Endothelial cell of umbilical vein (primary cell): ENCODE measurements at regions of chr3 and their contacts with region 1.

Region 1: GRCh38 chr3:16140116-16140893 is 34.2 kb upstream of the GALNT15 start:
- DNase-seq: peak; percentile 91
- H3K4me3 ChIP-seq: no peak overlapping the region
- H3K27ac ChIP-seq: peak overlapping the region; percentile 83
- H3K4me1 ChIP-seq: peaks cover 16% of the 10 kb centered on the region
- H3K27me3 ChIP-seq: no peaks in the 10 kb centered on the region
- CTCF ChIP-seq: no peak
- POLR2A ChIP-seq: peak; percentile 19

Region 2: GRCh38 chr3:15974647-15975046 is 165.7 kb before region 1 on chr3:
- CTCF ChIA-PET with region 1: no interaction called
- POLR2A ChIA-PET with region 1: no interaction called
- dilution Hi-C with region 1: no loop called
- intact Hi-C with region 1: no loop called
- DNase-seq: no peak
- H3K4me3 ChIP-seq: no peak overlapping the region
- H3K27ac ChIP-seq: no peak overlapping the region
- H3K4me1 ChIP-seq: no peaks in the 10 kb centered on the region
- H3K27me3 ChIP-seq: peaks cover 0 to 3% of the 10 kb centered on the region in 2 experiments
- CTCF ChIP-seq: peak; percentile 13 to 17
- POLR2A ChIP-seq: no peak

Region 3: DNA sequence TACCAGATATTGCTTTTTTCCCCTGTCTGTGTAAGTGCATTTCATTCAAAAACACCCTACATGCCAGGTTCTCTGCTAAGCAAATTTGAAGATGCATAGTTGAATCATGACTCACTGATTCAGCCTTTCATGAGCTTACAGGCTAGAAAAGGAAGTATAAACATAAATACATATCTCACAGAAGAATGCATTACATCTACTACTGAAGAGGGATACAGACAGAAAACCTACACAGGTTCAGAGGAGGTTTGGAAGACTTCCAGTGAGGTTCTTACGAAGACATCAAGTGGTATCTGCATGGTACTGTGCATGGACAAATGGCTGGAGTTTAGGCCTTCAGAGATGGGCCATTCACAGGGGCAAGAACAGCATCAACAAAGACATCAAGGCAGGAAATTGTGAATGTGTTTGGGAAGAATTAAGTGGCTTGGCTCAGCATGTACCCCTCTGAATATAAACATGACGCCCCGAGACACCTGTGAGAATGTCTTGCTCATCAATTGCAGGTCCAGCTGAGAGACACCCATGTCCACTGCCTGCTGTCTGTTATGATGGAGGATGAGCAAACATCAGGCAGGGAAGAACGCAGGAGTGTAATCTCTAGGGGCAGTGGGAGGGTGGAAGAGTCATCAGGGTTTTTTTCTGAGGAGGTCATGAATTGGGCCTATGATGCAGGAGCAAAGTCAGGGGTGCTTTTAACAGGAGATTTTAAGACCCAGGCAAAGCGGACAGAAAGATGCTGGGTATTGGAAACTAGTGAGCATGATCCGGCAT is 71.0 kb before region 1 on chr3:
- CTCF ChIA-PET with region 1: interaction called, 4 read pairs
- POLR2A ChIA-PET with region 1: no interaction called
- dilution Hi-C with region 1: no loop called
- intact Hi-C with region 1: loop called (anchors 2 kb)
- DNase-seq: peak; percentile 72
- H3K4me3 ChIP-seq: no peak overlapping the region
- H3K27ac ChIP-seq: peak overlapping the region; percentile 80
- H3K4me1 ChIP-seq: peaks cover 66% of the 10 kb centered on the region
- H3K27me3 ChIP-seq: no peaks in the 10 kb centered on the region
- CTCF ChIP-seq: no peak
- POLR2A ChIP-seq: no peak

Region 4: GRCh38 chr3:16338999-16339398 is 198.7 kb after region 1 on chr3:
- CTCF ChIA-PET with region 1: no interaction called
- POLR2A ChIA-PET with region 1: no interaction called
- dilution Hi-C with region 1: no loop called
- intact Hi-C with region 1: no loop called
- DNase-seq: peak; percentile 31
- H3K4me3 ChIP-seq: no peak overlapping the region
- H3K27ac ChIP-seq: no peak overlapping the region
- H3K4me1 ChIP-seq: no peaks in the 10 kb centered on the region
- H3K27me3 ChIP-seq: no peaks in the 10 kb centered on the region
- CTCF ChIP-seq: no peak
- POLR2A ChIP-seq: no peak